ENCODE measurements at regions of chr4 and their contacts with region 1.

Region 1: DNA sequence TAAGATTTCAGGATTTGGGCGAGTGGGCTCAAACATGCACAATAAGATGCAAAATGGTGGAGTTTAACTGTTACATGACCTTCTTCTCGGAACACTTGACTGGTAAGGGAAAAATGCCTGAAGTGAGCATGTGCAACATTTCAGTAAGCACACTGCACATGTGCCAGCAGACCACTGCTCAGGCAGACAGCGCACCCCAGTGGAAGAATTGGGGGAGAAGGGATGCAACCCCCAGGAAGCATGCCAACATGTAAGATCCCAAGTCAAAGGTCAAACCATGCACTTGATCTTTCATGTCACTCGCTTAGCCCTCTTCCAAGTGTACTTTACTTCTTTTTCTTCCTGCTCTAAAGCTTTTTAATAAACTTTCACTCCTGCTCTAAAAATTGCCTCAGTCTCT is 256.3 kb downstream of the CENPC start:
- DNase-seq: peak; percentile 55
- ATAC-seq: no peak
- H3K4me3 ChIP-seq: no peak overlapping the region
- H3K27ac ChIP-seq: no peak overlapping the region
- H3K4me1 ChIP-seq: peaks cover 17% of the 10 kb centered on the region
- H3K27me3 ChIP-seq: no peaks in the 10 kb centered on the region
- CTCF ChIP-seq: peak; percentile 63

Region 2: GRCh38 chr4:66923081-66923865 is 365.7 kb before region 1 on chr4:
- CTCF ChIA-PET with region 1: no interaction called
- POLR2A ChIA-PET with region 1: interaction called, 25 read pairs
- intact Hi-C with region 1: no loop called
- DNase-seq: no peak
- ATAC-seq: no peak
- H3K4me3 ChIP-seq: no peak overlapping the region
- H3K27ac ChIP-seq: no peak overlapping the region
- H3K4me1 ChIP-seq: no peaks in the 10 kb centered on the region
- H3K27me3 ChIP-seq: no peaks in the 10 kb centered on the region
- CTCF ChIP-seq: no peak

Region 3: DNA sequence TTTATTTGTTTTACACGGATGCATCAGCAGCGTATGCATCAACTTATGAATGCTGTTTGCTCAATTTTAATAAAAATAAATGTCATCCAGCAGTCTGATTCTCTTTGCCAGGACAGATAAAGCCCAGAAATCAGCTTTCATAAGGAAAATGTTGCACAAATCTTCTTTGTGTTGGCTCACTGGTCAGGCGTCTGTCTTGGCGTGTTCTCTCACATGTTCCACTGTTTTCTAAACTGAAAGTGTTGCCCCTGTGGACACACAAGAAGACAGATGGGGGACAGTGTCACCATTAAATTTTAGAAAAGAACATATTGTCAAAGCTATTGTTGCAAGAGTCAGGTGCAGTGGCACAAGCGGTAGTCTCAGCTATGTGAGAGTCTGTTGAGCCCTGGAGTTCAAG is 59.8 kb before region 1 on chr4:
- CTCF ChIA-PET with region 1: no interaction called
- POLR2A ChIA-PET with region 1: no interaction called
- intact Hi-C with region 1: no loop called
- DNase-seq: no peak
- ATAC-seq: no peak
- H3K4me3 ChIP-seq: no peak overlapping the region
- H3K27ac ChIP-seq: no peak overlapping the region
- H3K4me1 ChIP-seq: no peaks in the 10 kb centered on the region
- H3K27me3 ChIP-seq: no peaks in the 10 kb centered on the region; the same call in 1 of the 2 replicates
- CTCF ChIP-seq: no peak

Region 4: DNA sequence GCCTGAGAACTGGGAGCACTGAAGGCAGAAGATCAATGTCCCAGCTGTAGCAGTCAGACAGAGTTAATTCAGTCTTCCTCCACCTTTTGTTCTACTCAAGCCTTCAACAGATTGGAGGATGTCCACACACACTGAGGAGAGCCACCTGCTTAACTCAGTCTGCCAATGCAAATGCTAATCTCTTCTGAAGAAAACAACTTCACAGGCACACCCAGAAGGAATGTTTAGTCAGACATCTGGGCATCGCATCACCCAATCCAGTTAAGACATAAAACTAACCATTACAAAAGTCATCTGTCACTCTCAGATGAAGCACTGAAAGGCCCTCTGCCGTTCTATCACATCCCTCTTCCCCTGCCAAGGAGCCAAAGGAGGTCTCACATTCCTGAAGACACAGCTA is 82.7 kb after region 1 on chr4:
- CTCF ChIA-PET with region 1: no interaction called
- POLR2A ChIA-PET with region 1: no interaction called
- intact Hi-C with region 1: no loop called
- DNase-seq: no peak
- ATAC-seq: no peak
- H3K4me3 ChIP-seq: no peak overlapping the region
- H3K27ac ChIP-seq: no peak overlapping the region
- H3K4me1 ChIP-seq: no peaks in the 10 kb centered on the region
- H3K27me3 ChIP-seq: peaks cover 6% of the 10 kb centered on the region
- CTCF ChIP-seq: no peak